IMR-90 (cell line): ENCODE measurements at regions of chr5 and their contacts with region 1.

Region 1: GRCh38 chr5:13783726-13784125 is 160.8 kb downstream of the DNAH5 start:
- DNase-seq: no peak
- ATAC-seq: no peak
- H3K4me3 ChIP-seq: no peak overlapping the region
- H3K27ac ChIP-seq: no peak overlapping the region
- H3K4me1 ChIP-seq: no peaks in the 10 kb centered on the region; the same call in 1 of the 2 replicates
- H3K27me3 ChIP-seq: no peaks in the 10 kb centered on the region
- CTCF ChIP-seq: no peak
- POLR2A ChIP-seq: no peak
- RAD21 ChIP-seq: no peak

Region 2: DNA sequence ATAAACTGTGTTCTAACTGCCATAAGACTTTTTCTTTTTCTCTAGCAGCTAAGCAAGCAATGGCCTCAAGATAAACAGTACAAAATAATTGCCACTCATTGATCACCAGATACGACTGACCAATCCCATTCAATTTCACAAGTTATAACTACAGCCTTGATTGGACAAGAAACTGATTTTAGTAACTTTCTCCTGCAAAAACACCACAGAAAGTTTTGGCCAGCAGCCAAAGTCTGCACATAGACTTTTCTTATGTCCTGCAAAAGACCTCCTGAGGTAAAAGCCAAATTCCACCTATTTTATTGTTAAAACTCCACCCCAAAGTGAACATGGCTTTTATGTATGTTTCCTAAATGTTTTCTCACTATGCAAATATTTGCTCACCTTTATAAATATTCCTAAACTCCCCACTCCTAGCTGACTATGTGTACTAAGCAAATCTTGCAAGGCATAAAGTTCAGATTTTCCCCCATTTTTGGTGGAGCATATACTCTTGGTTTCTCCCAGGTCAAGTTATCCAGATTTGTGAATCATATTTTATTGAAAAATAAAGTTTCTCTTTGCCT is 285.5 kb before region 1 on chr5:
- CTCF ChIA-PET with region 1: no interaction called
- POLR2A ChIA-PET with region 1: no interaction called
- dilution Hi-C with region 1: no loop called
- in situ Hi-C with region 1: no loop called
- intact Hi-C with region 1: no loop called
- DNase-seq: no peak
- ATAC-seq: no peak
- H3K4me3 ChIP-seq: no peak overlapping the region
- H3K27ac ChIP-seq: no peak overlapping the region
- H3K4me1 ChIP-seq: no peaks in the 10 kb centered on the region
- H3K27me3 ChIP-seq: peaks cover 2% of the 10 kb centered on the region
- CTCF ChIP-seq: no peak
- POLR2A ChIP-seq: no peak
- RAD21 ChIP-seq: no peak

Region 3: DNA sequence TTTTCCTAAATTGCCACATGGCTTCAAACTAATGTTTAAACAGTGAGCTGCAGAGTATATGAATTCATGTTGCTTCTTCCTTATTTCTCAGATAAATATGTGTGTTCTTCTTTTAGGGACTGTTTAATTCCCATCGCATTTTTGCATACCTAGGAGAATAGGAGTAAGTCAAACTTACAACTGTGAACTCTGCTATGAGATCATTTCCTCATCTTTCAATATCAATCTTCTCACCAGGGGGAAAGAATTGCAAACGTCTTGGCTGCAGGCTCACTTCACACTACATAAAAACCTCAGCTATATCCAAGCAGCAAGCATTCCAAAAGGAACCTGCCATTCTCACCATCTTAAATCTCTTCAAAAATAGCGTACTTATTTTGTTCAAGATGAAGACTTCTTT is 110.2 kb before region 1 on chr5:
- CTCF ChIA-PET with region 1: no interaction called
- POLR2A ChIA-PET with region 1: no interaction called
- dilution Hi-C with region 1: no loop called
- in situ Hi-C with region 1: no loop called
- intact Hi-C with region 1: no loop called
- DNase-seq: peak; percentile 15
- ATAC-seq: peak; percentile 51; the same call in 1 of the 2 replicates
- H3K4me3 ChIP-seq: no peak overlapping the region
- H3K27ac ChIP-seq: no peak overlapping the region
- H3K4me1 ChIP-seq: no peaks in the 10 kb centered on the region
- H3K27me3 ChIP-seq: no peaks in the 10 kb centered on the region
- CTCF ChIP-seq: no peak
- POLR2A ChIP-seq: no peak
- RAD21 ChIP-seq: no peak

Region 4: DNA sequence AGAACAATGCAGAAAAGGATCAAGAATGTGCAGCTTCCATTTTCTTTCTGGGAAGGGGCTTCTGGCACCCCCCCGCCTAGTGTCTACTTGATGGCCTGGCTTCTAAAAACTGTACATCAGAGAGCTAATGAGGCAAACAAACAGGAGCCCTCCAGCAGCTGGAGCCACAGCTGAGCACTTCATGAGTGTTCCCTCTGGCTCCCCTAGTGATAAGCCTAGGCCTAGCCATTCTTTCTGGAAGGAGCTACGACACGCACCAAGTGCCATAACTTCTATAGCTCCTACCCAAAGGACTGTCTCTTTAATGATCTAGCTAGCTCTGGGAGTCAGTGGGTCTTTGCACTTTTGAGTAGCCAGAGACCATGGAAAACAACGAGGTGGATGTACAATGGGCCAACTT is 94.6 kb after region 1 on chr5:
- CTCF ChIA-PET with region 1: no interaction called
- POLR2A ChIA-PET with region 1: no interaction called
- dilution Hi-C with region 1: no loop called
- in situ Hi-C with region 1: no loop called
- intact Hi-C with region 1: loop called (anchors 10 kb)
- DNase-seq: no peak
- ATAC-seq: no peak
- H3K4me3 ChIP-seq: no peak overlapping the region
- H3K27ac ChIP-seq: no peak overlapping the region
- H3K4me1 ChIP-seq: no peaks in the 10 kb centered on the region
- H3K27me3 ChIP-seq: no peaks in the 10 kb centered on the region
- CTCF ChIP-seq: no peak
- POLR2A ChIP-seq: no peak
- RAD21 ChIP-seq: no peak